Caki2 (cell line): ENCODE measurements at regions of chr16 and their contacts with region 1.

Region 1: GRCh38 chr16:8241408-8241807 is 348.9 kb downstream of the TMEM114 start:
- DNase-seq: no peak

Region 2: DNA sequence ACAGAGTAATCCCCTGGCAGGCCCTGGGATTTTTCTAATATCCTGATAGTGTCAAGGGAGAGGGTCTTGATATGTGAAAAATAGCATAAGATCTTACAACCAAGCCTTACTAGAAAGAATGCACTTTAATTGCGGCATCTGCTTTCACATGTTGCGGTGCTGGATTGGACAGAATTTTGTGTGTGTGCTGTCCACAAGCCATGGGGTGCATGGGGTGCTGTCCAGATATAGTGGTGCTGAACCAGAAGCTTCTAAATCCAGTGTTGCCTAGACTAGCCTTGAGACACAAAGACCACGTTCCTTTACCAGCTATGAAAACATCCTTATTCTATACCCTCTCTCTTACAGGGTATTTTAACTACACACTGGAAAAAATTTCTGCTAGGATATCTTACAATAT is 104.9 kb after region 1 on chr16:
- in situ Hi-C with region 1: loop called (anchors 10 kb)
- DNase-seq: peak; percentile 27